Activated naive CD4-positive, alpha-beta T cell treated with anti-CD3 and anti-CD28 coated beads for 36 hours (primary cell): ENCODE measurements at regions of chr5 and their contacts with region 1.

Region 1: DNA sequence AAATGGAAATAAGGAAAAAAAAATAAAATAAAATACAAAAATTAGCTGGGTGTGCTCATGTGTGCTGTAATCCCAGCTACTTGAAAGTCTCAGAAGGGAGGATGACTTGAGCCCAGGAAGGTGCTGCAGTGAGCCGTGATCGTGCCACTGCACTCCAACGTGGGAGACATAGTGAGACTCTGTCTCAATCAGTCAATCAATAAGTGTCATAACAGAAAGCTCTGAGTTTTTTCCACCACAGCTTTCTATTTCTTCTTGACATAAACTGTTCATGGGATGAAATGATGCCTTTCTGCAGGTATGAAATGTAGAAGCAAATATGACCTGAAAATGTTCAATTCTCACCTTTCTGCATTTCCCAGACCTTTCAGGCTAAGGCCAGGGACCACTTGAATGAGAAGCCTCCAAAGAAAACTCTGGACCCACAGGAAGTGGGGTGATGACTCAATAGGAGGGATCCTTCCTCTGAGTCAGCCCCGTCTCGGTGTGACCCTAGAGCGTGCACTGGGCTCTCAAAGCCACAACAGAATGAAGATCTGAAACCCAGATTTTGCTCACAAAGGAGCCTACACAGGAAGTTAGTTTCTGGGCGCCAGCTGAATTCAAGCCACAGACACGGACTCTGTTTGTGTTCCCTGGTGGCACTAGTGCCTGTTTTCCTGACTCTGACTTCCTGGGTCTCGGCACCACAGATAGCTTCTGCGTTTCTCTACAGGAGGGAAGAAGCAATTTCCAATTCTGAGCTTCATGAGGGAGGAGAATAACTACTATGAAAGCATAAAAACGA is 62.0 kb downstream of the ANKH start:
- DNase-seq: peak; percentile 89
- H3K4me3 Mint-ChIP-seq: peak overlapping the region; percentile 55
- H3K27ac Mint-ChIP-seq: peak overlapping the region; percentile 69
- H3K4me1 Mint-ChIP-seq: peaks cover 53% of the 10 kb centered on the region
- H3K27me3 Mint-ChIP-seq: no peaks in the 10 kb centered on the region

Region 2: GRCh38 chr5:14581333-14581890 is 228.2 kb before region 1 on chr5 and contains the start of gene OTULINL:
- CTCF ChIA-PET with region 1: no interaction called
- intact Hi-C with region 1: loop called (anchors 1 kb)
- DNase-seq: peak; percentile 91
- H3K4me3 Mint-ChIP-seq: peak within 1 kb of the TSS; percentile 75
- H3K27ac Mint-ChIP-seq: peak within 1 kb of the TSS; percentile 70
- H3K4me1 Mint-ChIP-seq: peaks cover 26% of the 10 kb centered on the region
- H3K27me3 Mint-ChIP-seq: peaks cover 2% of the 10 kb centered on the region
- total RNA-seq, gene OTULINL: 9.1 to 10.6 TPM

Region 3: DNA sequence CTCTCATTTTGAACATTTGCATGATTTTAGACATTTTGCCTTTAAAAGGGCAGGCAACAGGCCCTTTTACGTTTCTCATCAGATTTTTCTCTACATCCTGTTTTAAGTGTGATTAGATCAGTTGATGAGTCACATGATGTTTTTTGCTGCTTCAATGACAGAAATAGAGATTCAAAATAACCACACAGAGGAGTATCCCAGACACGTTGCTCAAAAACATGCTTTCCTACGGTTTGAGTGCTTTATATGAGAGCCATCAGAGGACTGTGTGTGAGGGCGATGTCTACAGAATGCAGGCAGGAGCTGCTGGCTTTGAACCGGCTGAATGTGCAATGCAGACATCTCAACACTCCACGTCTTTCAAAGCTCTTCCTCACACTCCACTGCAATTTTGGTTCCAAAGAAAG is 102.9 kb before region 1 on chr5:
- CTCF ChIA-PET with region 1: no interaction called
- intact Hi-C with region 1: loop called (anchors 1 kb)
- DNase-seq: peak; percentile 46
- H3K4me3 Mint-ChIP-seq: peak overlapping the region; percentile 18
- H3K27ac Mint-ChIP-seq: peak overlapping the region; percentile 94
- H3K4me1 Mint-ChIP-seq: peaks cover 75% of the 10 kb centered on the region
- H3K27me3 Mint-ChIP-seq: no peaks in the 10 kb centered on the region

Region 4: GRCh38 chr5:14727428-14727865 is 82.1 kb before region 1 on chr5:
- CTCF ChIA-PET with region 1: no interaction called
- intact Hi-C with region 1: loop called (anchors 1 kb)
- DNase-seq: peak; percentile 83
- H3K4me3 Mint-ChIP-seq: no peak overlapping the region
- H3K27ac Mint-ChIP-seq: no peak overlapping the region
- H3K4me1 Mint-ChIP-seq: peaks cover 19% of the 10 kb centered on the region
- H3K27me3 Mint-ChIP-seq: no peaks in the 10 kb centered on the region

Region 5: DNA sequence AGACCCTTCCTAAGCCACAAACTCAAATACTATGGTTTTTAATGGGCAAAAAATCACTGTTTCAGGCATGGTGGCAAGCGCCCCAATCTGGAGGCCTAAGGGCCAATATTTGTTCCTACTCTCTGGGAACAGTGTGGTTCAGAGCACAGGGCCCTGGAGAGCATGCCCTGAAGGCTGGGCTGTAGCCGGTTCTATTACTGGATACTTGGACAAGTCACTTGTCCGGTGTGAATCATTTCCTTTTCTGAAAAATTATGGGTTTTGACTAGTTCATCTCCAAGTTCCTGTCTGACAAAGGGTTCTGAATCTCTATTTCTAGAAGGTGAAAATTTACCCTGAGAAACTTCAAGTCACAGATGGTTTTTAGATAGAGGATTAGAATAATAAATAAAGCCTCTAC is 70.0 kb before region 1 on chr5:
- CTCF ChIA-PET with region 1: no interaction called
- intact Hi-C with region 1: no loop called
- DNase-seq: no peak
- H3K4me3 Mint-ChIP-seq: no peak overlapping the region
- H3K27ac Mint-ChIP-seq: no peak overlapping the region
- H3K4me1 Mint-ChIP-seq: peaks cover 14% of the 10 kb centered on the region
- H3K27me3 Mint-ChIP-seq: no peaks in the 10 kb centered on the region

Region 6: GRCh38 chr5:14824499-14824898 is 14.9 kb after region 1 on chr5:
- CTCF ChIA-PET with region 1: no interaction called
- intact Hi-C with region 1: no loop called
- DNase-seq: no peak
- H3K4me3 Mint-ChIP-seq: no peak overlapping the region
- H3K27ac Mint-ChIP-seq: no peak overlapping the region
- H3K4me1 Mint-ChIP-seq: peaks cover 50% of the 10 kb centered on the region
- H3K27me3 Mint-ChIP-seq: no peaks in the 10 kb centered on the region

Region 7: DNA sequence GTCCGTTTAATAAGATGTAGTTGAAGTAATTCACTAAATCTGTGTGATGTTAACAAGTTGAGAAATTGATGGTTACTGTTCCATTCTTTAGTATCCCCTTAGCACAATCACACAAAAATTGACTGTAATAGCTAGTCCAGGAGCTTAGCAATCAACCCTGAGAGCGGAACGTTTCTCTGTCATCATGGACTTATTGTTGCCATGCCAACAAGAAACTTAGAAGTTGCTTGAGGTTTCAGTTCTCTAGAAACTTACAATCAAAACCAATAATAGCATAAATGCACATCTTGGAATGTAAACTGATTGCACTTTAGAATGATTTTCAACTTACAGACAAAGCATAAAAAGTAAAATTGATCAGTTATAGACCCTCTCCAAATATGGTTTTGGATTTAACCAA is 187.4 kb after region 1 on chr5:
- CTCF ChIA-PET with region 1: interaction called, 4 read pairs
- intact Hi-C with region 1: loop called (anchors 2 kb)
- DNase-seq: no peak
- H3K4me3 Mint-ChIP-seq: no peak overlapping the region
- H3K27ac Mint-ChIP-seq: no peak overlapping the region
- H3K4me1 Mint-ChIP-seq: peaks cover 14% of the 10 kb centered on the region
- H3K27me3 Mint-ChIP-seq: no peaks in the 10 kb centered on the region